Testis (tissue), 5 donors: ENCODE measurements at regions of chr3 and their contacts with region 1.

Region 1: GRCh38 chr3:78660957-78661356 is 1106.8 kb downstream of the ROBO1 start:
- DNase-seq: peak; percentile 22
- H3K4me3 ChIP-seq: no peak overlapping the region
- H3K27ac ChIP-seq: no peak overlapping the region
- H3K4me1 ChIP-seq: peaks cover 3% of the 10 kb centered on the region
- H3K27me3 ChIP-seq: no peaks in the 10 kb centered on the region
- CTCF ChIP-seq: no peak
- POLR2A ChIP-seq: no peak

Region 2: GRCh38 chr3:78287085-78287484 is 373.9 kb before region 1 on chr3:
- intact Hi-C with region 1: no loop called
- DNase-seq: no peak
- H3K4me3 ChIP-seq: no peak overlapping the region
- H3K27ac ChIP-seq: no peak overlapping the region
- H3K4me1 ChIP-seq: no peaks in the 10 kb centered on the region
- H3K27me3 ChIP-seq: no peaks in the 10 kb centered on the region
- CTCF ChIP-seq: no peak
- POLR2A ChIP-seq: no peak

Region 3: DNA sequence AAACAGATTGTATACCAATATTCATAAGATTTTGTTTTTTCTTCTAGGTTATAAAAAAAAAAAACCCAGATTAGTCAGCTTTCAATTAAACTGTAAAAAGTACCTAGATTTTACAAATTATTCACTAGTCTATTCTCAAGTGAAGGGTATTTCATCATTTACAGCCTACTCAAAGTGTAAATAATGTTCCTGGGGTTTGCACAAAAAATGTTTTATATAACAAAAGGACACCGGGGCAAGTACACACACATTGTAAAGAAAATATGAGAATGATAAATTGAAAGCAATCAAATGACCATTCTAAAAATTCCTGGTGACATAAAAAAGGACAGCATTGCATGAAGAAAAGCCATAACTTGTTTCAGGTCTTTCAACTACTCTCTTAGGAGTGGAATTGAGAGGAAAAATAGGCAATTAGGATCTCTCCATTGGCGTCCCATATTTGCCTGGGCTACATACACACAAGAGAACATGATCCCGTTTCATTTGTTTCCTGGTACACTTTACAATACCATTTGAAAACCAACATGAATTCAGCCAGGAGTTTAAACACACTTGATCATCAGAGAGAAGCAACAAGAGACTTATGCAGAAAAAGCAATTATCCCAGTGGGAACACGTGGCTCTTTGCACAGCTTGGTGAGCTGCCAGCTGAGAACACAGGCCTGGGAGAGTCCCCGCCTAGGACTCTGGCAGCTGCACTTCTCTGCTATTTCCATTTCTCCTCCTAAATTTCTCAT is 67.6 kb after region 1 on chr3:
- intact Hi-C with region 1: no loop called
- DNase-seq: peak; percentile 84
- H3K4me3 ChIP-seq: no peak overlapping the region
- H3K27ac ChIP-seq: no peak overlapping the region
- H3K4me1 ChIP-seq: no peaks in the 10 kb centered on the region
- H3K27me3 ChIP-seq: no peaks in the 10 kb centered on the region
- CTCF ChIP-seq: no peak
- POLR2A ChIP-seq: no peak

Region 4: DNA sequence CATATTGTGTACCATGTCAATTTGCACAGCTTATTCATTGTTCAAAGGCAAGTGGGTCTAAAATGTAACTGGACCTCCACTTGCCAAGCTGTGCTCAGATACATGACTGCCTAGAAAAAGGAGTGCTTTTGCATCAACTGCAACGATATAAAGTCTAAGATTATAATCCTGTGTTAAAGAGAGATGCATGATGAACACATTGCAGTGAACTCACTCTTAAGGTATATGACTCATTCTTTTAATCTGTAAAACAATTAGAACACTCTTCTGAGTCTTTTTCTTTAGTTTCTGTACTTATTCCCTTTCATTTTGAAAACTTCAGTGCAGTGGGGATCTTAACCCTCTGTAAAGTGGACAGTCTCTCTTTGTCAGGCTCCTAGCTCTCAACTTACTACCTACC is 124.0 kb after region 1 on chr3:
- intact Hi-C with region 1: no loop called
- DNase-seq: no peak
- H3K4me3 ChIP-seq: no peak overlapping the region
- H3K27ac ChIP-seq: no peak overlapping the region
- H3K4me1 ChIP-seq: no peaks in the 10 kb centered on the region
- H3K27me3 ChIP-seq: no peaks in the 10 kb centered on the region
- CTCF ChIP-seq: no peak
- POLR2A ChIP-seq: no peak

Region 5: DNA sequence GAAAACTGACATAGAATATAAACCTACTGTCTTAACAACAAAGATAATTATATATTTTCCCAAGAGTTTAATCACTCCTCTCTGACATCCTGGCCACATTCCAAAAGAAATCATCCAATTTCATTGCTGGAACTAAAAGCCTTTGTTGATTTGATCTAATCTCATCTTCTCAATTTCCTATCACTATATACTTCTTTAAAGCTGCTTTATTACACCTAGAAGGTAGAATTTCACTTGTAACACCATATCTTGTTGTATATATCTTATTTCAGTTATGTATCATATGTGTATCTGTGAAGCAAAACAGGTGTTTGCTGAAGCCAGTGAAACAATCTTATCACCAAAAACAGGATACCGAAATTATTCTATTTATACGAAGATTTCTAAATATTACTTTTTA is 366.6 kb after region 1 on chr3:
- intact Hi-C with region 1: loop called (anchors 5 kb)
- DNase-seq: no peak
- H3K4me3 ChIP-seq: no peak overlapping the region
- H3K27ac ChIP-seq: no peak overlapping the region
- H3K4me1 ChIP-seq: no peaks in the 10 kb centered on the region
- H3K27me3 ChIP-seq: no peaks in the 10 kb centered on the region
- CTCF ChIP-seq: no peak
- POLR2A ChIP-seq: no peak